Activated naive CD4-positive, alpha-beta T cell treated with anti-CD3 and anti-CD28 coated beads for 36 hours (primary cell): ENCODE measurements at regions of chr9 and their contacts with region 1.

Region 1: GRCh38 chr9:133347985-133348717 is at the starts of genes MED22 and RPL7A:
- DNase-seq: peak; percentile 97
- H3K4me3 Mint-ChIP-seq: peak within 1 kb of the TSS; percentile 92
- H3K27ac Mint-ChIP-seq: peak within 1 kb of the TSS; percentile 97
- H3K4me1 Mint-ChIP-seq: peaks cover 37% of the 10 kb centered on the region
- H3K27me3 Mint-ChIP-seq: no peaks in the 10 kb centered on the region
- total RNA-seq, gene MED22: 18.4 to 21.5 TPM
- total RNA-seq, gene RPL7A: 3,985 to 4,111 TPM

Region 2: GRCh38 chr9:131418143-131419028 is 1929.8 kb before region 1 on chr9:
- CTCF ChIA-PET with region 1: no interaction called
- intact Hi-C with region 1: no loop called
- DNase-seq: no peak
- H3K4me3 Mint-ChIP-seq: no peak overlapping the region
- H3K27ac Mint-ChIP-seq: peak overlapping the region; percentile 81
- H3K4me1 Mint-ChIP-seq: peaks cover 91% of the 10 kb centered on the region
- H3K27me3 Mint-ChIP-seq: no peaks in the 10 kb centered on the region

Region 3: DNA sequence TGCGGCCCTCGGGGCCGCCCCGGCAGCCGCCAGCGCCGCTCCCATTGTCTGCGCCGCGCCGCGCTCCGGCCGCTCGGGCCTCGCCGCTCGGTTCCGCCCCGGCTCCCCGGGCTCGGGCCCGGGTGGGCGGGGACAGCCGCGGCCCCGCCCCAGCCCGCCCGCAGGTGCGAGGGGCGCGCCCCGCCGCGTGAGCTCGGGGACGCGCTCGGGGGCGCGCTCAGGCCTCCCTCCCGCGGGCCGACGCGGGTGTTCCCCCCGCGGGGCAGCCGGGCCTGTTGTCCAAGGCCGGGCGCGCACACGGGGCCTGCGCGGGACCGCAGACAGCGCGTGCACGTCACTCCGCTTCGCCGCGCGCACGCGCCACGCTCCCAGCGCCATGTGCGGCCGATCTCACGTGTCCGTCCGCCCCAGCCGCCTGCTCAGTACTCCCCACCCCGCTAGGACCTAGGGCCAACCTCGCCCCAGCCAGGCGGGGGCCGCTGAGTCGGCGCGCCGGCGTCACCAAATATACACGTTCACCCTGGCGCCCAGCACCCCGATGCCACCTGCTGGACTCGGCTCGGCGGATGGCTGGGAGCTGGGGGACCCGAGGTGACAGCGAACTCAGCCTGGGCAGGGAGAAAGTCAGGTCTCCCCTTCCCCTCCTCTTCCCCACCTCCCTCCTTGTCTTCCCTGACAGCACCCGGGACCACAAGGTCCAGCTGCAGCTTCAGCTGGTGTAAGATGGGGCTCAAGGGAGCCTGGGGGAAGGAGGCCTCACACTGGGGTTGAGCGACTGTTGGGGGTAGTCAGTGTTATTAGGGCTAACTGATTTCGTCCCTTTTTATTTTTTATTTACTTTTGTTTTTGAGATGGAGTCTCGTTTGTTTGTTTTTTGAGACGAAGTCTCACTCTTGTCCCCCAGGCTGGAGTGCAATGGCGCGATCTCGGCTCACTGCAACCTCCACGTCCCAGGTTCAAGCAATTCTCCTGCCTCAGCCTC is 198.7 kb before region 1 on chr9:
- CTCF ChIA-PET with region 1: no interaction called
- intact Hi-C with region 1: no loop called
- DNase-seq: peak; percentile 76
- H3K4me3 Mint-ChIP-seq: peak overlapping the region; percentile 72
- H3K27ac Mint-ChIP-seq: peak overlapping the region; percentile 69
- H3K4me1 Mint-ChIP-seq: peaks cover 24% of the 10 kb centered on the region
- H3K27me3 Mint-ChIP-seq: no peaks in the 10 kb centered on the region

Region 4: DNA sequence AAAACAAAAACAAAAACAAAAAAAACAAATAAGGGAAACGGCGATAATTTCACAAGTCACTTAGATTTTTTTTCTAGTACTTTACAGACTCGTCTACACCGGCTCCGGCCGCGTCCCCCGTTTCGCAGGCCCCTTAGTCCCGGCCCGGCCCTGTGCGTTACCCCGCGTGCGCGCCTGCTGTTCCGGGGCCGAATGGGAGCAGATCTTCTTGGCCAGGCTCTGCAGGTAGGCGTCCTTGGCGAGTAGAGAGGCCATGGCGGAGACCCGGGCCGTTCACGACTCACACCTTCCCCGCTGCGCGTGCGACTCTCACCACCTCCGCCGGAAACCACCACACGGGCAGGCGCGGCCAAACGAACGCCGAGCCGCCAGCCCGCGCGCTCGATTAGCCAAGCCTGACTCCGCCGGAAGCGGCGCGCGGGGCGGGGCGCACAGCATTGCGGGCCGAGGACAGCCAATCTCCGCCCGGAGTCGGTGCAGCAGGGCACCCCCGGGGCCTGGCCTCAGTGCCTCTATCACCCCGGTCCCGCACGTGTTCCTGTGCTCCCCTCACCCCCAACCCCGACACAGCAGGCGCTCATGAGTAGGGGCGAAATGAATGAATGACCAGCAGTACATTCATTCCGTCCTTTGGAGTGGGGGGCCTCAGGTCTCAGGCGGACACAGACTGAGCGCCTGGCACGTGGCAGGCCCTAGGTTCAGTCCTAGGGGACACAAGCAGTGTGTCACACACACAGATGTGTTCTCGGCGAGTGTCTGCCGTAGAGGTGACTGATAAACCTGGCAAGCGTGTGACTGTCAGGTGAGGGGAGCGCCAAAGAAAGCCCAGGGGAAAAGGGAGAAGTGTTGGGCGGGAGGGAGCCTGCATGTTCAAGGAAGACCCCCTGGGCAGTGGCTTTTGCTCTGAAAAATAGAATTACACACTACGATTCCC is 12.0 kb before region 1 on chr9 and contains the start of gene SURF6:
- CTCF ChIA-PET with region 1: interaction called, 3 read pairs
- intact Hi-C with region 1: loop called (anchors 1 kb)
- DNase-seq: peak; percentile 95
- H3K4me3 Mint-ChIP-seq: peak within 1 kb of the TSS; percentile 97
- H3K27ac Mint-ChIP-seq: peak within 1 kb of the TSS; percentile 87
- H3K4me1 Mint-ChIP-seq: peaks cover 40% of the 10 kb centered on the region
- H3K27me3 Mint-ChIP-seq: no peaks in the 10 kb centered on the region
- total RNA-seq, gene SURF6: 13.6 to 13.8 TPM

Region 5: GRCh38 chr9:133406480-133407307 is 58.5 kb after region 1 on chr9:
- CTCF ChIA-PET with region 1: no interaction called
- intact Hi-C with region 1: loop called (anchors 2 kb)
- DNase-seq: peak; percentile 84
- H3K4me3 Mint-ChIP-seq: no peak overlapping the region
- H3K27ac Mint-ChIP-seq: peak overlapping the region; percentile 39
- H3K4me1 Mint-ChIP-seq: peaks cover 10% of the 10 kb centered on the region
- H3K27me3 Mint-ChIP-seq: no peaks in the 10 kb centered on the region

Region 6: GRCh38 chr9:133417541-133418461 is 69.7 kb after region 1 on chr9 and contains the start of gene REXO4:
- CTCF ChIA-PET with region 1: no interaction called
- intact Hi-C with region 1: loop called (anchors 2 kb)
- DNase-seq: peak; percentile 86
- H3K4me3 Mint-ChIP-seq: peak within 1 kb of the TSS; percentile 92
- H3K27ac Mint-ChIP-seq: peak within 1 kb of the TSS; percentile 91
- H3K4me1 Mint-ChIP-seq: peaks cover 54% of the 10 kb centered on the region
- H3K27me3 Mint-ChIP-seq: no peaks in the 10 kb centered on the region
- total RNA-seq, gene REXO4: 22.5 to 27.0 TPM

Region 7: GRCh38 chr9:133589454-133590227 is 241.5 kb after region 1 on chr9:
- CTCF ChIA-PET with region 1: no interaction called
- intact Hi-C with region 1: no loop called
- DNase-seq: peak; percentile 63
- H3K4me3 Mint-ChIP-seq: no peak overlapping the region
- H3K27ac Mint-ChIP-seq: no peak overlapping the region
- H3K4me1 Mint-ChIP-seq: peaks cover 6% of the 10 kb centered on the region
- H3K27me3 Mint-ChIP-seq: peaks cover 9% of the 10 kb centered on the region